ENCODE measurements at regions of chr17 and their contacts with region 1.

Region 1: GRCh38 chr17:18960803-18961511 is 9.0 kb downstream of the SLC5A10 start:
- DNase-seq: peak; percentile 90
- ATAC-seq: peak; percentile 83
- H3K4me3 Mint-ChIP-seq: no peak overlapping the region
- H3K27ac Mint-ChIP-seq: no peak overlapping the region
- H3K4me1 Mint-ChIP-seq: peaks cover 26% of the 10 kb centered on the region
- H3K27me3 Mint-ChIP-seq: no peaks in the 10 kb centered on the region
- CTCF ChIP-seq: peak; percentile 94

Region 2: DNA sequence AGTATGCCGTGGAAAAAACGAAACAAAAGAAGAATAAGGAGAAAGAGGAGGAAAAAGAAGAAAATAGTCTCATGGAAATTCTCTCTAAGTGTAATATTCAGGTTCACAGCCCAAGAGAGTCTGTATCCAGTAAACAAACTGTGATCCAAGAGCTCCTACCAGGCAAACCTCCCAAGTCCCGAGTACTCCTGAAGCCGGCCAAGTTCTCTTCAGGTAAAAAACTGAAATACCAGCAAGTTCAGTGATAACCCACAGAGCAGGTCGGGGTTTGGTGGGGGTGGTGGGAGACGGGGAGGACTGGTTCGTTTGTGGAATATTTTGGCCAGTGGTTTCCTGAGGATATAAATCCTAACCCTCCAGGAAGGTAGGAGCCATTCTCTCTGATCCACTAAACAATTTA is 188.5 kb before region 1 on chr17:
- CTCF ChIA-PET with region 1: no interaction called
- POLR2A ChIA-PET with region 1: no interaction called
- intact Hi-C with region 1: no loop called
- DNase-seq: no peak
- ATAC-seq: no peak
- H3K4me3 Mint-ChIP-seq: no peak overlapping the region
- H3K27ac Mint-ChIP-seq: no peak overlapping the region
- H3K4me1 Mint-ChIP-seq: peaks cover 7% of the 10 kb centered on the region
- H3K27me3 Mint-ChIP-seq: no peaks in the 10 kb centered on the region
- CTCF ChIP-seq: no peak

Region 3: GRCh38 chr17:18855831-18856569 is 105.0 kb before region 1 on chr17:
- CTCF ChIA-PET with region 1: interaction called, 15 read pairs
- POLR2A ChIA-PET with region 1: no interaction called
- intact Hi-C with region 1: no loop called
- DNase-seq: peak; percentile 95
- ATAC-seq: peak; percentile 83
- H3K4me3 Mint-ChIP-seq: peak overlapping the region; percentile 83
- H3K27ac Mint-ChIP-seq: peak overlapping the region; percentile 87
- H3K4me1 Mint-ChIP-seq: peaks cover 31% of the 10 kb centered on the region
- H3K27me3 Mint-ChIP-seq: no peaks in the 10 kb centered on the region
- CTCF ChIP-seq: no peak

Region 4: DNA sequence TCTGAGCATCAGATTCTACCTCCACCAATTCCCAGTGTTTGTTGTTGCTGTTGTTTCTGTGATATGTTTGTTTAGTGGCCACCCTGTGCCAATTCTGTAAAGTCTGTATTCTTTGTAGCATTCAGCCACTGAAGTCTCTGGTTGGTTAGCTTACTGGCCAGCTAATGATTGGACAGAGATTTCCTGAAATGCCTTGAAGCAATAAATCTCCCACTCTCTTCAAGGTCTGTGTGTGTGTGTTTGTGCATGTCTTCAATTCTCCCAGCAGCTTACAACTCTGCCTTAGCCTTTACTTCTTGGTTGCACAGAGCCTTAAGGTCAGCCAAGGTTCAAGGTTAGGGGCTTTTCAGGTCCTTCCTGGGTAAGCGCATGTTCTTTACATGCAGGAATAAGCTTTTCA is 64.8 kb before region 1 on chr17:
- CTCF ChIA-PET with region 1: interaction called, 15 read pairs
- POLR2A ChIA-PET with region 1: no interaction called
- intact Hi-C with region 1: no loop called
- DNase-seq: no peak
- ATAC-seq: no peak
- H3K4me3 Mint-ChIP-seq: no peak overlapping the region
- H3K27ac Mint-ChIP-seq: no peak overlapping the region
- H3K4me1 Mint-ChIP-seq: peaks cover 30% of the 10 kb centered on the region
- H3K27me3 Mint-ChIP-seq: no peaks in the 10 kb centered on the region
- CTCF ChIP-seq: no peak

Region 5: GRCh38 chr17:18944646-18945045 is 16.3 kb before region 1 on chr17:
- CTCF ChIA-PET with region 1: interaction called, 16 read pairs
- POLR2A ChIA-PET with region 1: interaction called, 3 read pairs
- intact Hi-C with region 1: no loop called
- DNase-seq: no peak
- ATAC-seq: no peak
- H3K4me3 Mint-ChIP-seq: no peak overlapping the region
- H3K27ac Mint-ChIP-seq: no peak overlapping the region
- H3K4me1 Mint-ChIP-seq: peaks cover 2% of the 10 kb centered on the region
- H3K27me3 Mint-ChIP-seq: no peaks in the 10 kb centered on the region
- CTCF ChIP-seq: no peak

Region 6: GRCh38 chr17:18976201-18976600 is 15.2 kb after region 1 on chr17:
- CTCF ChIA-PET with region 1: interaction called, 14 read pairs
- POLR2A ChIA-PET with region 1: interaction called, 3 read pairs
- intact Hi-C with region 1: no loop called
- DNase-seq: no peak
- ATAC-seq: no peak
- H3K4me3 Mint-ChIP-seq: no peak overlapping the region
- H3K27ac Mint-ChIP-seq: no peak overlapping the region
- H3K4me1 Mint-ChIP-seq: peaks cover 11% of the 10 kb centered on the region
- H3K27me3 Mint-ChIP-seq: no peaks in the 10 kb centered on the region
- CTCF ChIP-seq: no peak

Region 7: DNA sequence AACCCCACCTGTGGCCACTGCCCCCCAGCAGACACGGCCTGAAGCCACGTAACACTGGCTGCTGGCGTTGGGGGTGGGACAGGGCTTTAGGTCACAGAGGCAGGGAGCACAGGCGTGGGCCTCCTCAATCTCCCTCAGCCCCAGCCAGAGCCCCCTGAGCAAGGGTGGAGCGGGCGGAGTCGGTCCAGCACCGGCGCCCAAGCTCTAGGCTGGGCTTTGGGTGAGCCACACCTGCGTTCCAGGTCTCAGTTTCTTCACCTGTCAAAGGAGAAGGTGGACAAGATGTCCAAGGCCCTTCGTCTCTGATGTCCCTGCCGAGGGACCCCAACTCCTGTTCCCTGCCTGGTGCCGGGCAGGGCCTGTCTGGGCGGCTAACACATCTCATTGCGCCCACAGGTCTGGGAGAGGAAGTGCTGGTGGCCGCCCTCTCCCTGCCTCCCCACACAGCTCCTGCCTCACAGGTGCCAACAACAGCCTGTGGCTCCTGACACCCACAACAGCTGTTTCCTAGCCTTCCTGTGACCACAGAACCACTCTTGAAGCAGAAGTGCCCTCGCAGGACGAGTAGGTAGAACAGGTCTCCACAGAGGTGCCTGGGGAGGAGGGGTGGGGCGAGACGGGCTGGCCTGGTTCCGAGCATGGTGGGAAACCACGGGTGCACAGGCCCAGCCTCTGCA is 31.6 kb after region 1 on chr17:
- CTCF ChIA-PET with region 1: interaction called, 15 read pairs
- POLR2A ChIA-PET with region 1: no interaction called
- intact Hi-C with region 1: no loop called
- DNase-seq: peak; percentile 60
- ATAC-seq: peak; percentile 70
- H3K4me3 Mint-ChIP-seq: no peak overlapping the region
- H3K27ac Mint-ChIP-seq: no peak overlapping the region
- H3K4me1 Mint-ChIP-seq: peaks cover 32% of the 10 kb centered on the region
- H3K27me3 Mint-ChIP-seq: no peaks in the 10 kb centered on the region
- CTCF ChIP-seq: no peak

Region 8: DNA sequence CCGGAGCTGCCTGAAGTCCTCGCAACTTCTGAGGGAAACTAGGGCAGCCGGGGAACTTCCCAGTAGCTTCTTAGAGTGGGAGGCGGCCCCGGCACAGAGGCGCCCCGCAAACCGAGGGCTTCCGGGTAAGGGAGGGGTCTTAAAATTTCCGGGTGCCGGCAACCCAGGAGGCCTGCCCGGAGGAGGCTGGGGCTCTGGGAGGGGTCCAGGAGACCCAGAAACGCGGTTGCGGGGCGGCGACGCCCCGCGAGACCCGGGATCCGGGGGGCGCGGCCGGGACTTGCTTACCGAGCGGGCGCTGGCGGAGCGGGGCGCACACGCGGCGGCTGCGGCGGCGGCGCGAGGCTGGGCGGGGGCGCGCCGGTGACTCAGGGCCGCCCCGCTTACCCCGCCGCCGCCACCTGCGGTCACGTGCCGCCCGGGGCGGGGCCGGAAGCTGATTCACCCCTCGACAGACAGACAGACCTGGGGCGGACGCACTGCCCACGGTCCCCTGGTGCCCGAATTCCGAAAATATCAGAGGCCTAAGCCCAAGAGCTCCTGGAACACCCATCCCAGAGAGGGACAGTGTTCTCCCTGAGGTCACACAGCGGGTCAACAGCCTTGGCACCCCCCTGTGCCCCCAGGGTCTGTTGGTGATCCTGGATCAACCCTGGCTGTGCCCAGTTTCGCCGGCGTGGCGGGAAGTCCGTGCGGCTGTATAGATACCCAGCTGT is 43.6 kb after region 1 on chr17 and contains the start of gene FAM83G:
- CTCF ChIA-PET with region 1: interaction called, 16 read pairs
- POLR2A ChIA-PET with region 1: interaction called, 14 read pairs
- intact Hi-C with region 1: no loop called
- DNase-seq: peak; percentile 94
- ATAC-seq: peak; percentile 86
- H3K4me3 Mint-ChIP-seq: peak within 1 kb of the TSS; percentile 83
- H3K27ac Mint-ChIP-seq: peak within 1 kb of the TSS; percentile 91
- H3K4me1 Mint-ChIP-seq: peaks cover 23% of the 10 kb centered on the region
- H3K27me3 Mint-ChIP-seq: no peaks in the 10 kb centered on the region
- CTCF ChIP-seq: no peak
- total RNA-seq, gene FAM83G: 11.9 to 12.1 TPM

Measured in activated CD8-positive, alpha-beta T cell treated with anti-CD3 and anti-CD28 coated beads for 36 hours (primary cell).